AG04449 (cell line): ENCODE measurements at regions of chr14 and their contacts with region 1.

Region 1: DNA sequence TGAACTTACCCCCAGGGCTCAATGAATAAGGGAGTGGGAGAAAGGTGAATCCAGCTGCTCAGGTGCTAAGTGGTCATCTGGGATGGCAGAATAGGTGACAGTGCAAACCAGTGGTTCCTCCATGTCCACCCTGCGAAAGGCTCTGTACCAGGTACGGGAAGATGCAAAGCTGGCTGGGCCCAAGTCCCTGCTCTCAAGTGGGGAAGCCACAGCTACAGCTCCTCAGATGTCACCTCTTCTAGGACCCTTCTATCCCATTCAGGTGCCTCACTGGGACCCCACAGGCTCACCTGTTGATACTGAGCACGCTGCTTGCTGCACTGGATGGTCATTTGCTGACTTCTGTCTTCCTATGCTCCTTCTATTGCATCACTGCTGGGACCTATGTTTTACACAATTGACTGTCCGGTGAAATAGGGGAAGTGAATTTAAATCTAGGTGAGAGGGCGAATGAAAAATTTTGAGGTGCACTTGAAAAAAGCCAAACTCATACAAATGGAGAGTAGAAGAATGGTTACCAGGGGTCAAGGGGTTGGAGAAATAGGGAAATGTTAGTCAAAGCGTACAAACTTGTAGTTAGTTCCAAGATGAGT is 20.3 kb upstream of the PPP4R4 start:
- DNase-seq: no peak
- H3K4me3 ChIP-seq: no peak overlapping the region
- CTCF ChIP-seq: no peak

Region 2: GRCh38 chr14:94100847-94101246 is 53.0 kb before region 1 on chr14:
- CTCF ChIA-PET with region 1: no interaction called
- POLR2A ChIA-PET with region 1: no interaction called
- DNase-seq: peak; percentile 45
- H3K4me3 ChIP-seq: no peak overlapping the region
- CTCF ChIP-seq: no peak

Region 3: GRCh38 chr14:94143239-94143638 is 10.6 kb before region 1 on chr14:
- CTCF ChIA-PET with region 1: interaction called, 17 read pairs
- POLR2A ChIA-PET with region 1: no interaction called
- DNase-seq: no peak
- H3K4me3 ChIP-seq: no peak overlapping the region
- CTCF ChIP-seq: peak; percentile 25